Transverse colon (tissue), 4 donors: ENCODE measurements at regions of chr3 and their contacts with region 1.

Region 1: GRCh38 chr3:118884748-118885206 is 149.9 kb downstream of the IGSF11 start:
- DNase-seq: peak; percentile 73
- H3K4me3 ChIP-seq: no peak overlapping the region
- H3K27ac ChIP-seq: no peak overlapping the region
- H3K4me1 ChIP-seq: no peaks in the 10 kb centered on the region
- H3K27me3 ChIP-seq: peaks cover 7% of the 10 kb centered on the region
- CTCF ChIP-seq: peak; percentile 70 to 83 (median 77)
- EP300 ChIP-seq: no peak
- POLR2A ChIP-seq: no peak

Region 2: GRCh38 chr3:118029049-118029448 is 855.7 kb before region 1 on chr3:
- in situ Hi-C with region 1: no loop called
- intact Hi-C with region 1: loop called (anchors 5 kb)
- DNase-seq: no peak
- H3K4me3 ChIP-seq: no peak overlapping the region
- H3K27ac ChIP-seq: no peak overlapping the region
- H3K4me1 ChIP-seq: no peaks in the 10 kb centered on the region
- H3K27me3 ChIP-seq: no peaks in the 10 kb centered on the region
- CTCF ChIP-seq: no peak
- EP300 ChIP-seq: no peak
- POLR2A ChIP-seq: no peak

Region 3: DNA sequence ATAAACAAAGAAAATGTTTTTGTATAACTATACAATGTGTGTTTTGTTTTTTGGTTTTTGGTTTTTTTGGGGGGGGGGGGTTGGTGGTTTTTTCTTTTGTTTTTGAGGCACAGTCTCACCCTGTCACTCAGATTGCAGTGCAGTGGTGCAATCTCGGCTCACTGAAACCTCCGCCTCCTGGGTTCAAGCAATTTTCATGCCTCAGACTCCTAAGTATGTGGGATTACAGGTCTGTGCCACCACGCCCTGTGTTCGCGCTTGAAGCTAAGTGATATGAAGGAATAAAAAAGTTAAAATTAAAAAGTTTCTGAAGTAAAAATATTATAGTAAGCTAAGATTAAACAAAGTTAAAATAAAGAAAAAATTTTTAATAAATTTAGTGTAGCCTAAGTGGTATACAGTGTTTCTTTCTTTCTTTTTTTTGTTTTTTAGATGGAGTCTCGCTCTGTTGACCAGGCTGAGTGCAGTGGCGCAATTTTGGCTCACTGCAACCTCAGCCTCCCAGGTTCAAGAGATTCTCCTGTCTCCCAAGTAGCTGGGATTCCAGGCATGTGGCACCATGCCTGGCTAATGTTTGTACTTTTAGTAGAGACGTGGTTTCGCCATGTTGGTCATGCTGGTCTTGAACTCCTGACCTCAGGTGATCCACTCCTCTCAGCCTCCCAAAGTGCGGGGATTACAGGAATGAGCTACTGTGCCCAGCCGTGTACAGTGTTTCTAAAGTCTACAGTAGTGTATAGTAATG is 207.3 kb after region 1 on chr3:
- in situ Hi-C with region 1: loop called in 2 of 4 experiments (anchors 5 to 10 kb)
- intact Hi-C with region 1: no loop called
- DNase-seq: no peak
- H3K4me3 ChIP-seq: no peak overlapping the region
- H3K27ac ChIP-seq: no peak overlapping the region
- H3K4me1 ChIP-seq: no peaks in the 10 kb centered on the region
- H3K27me3 ChIP-seq: no peaks in the 10 kb centered on the region
- CTCF ChIP-seq: no peak
- EP300 ChIP-seq: no peak
- POLR2A ChIP-seq: no peak

Region 4: GRCh38 chr3:119240591-119241434 is 356.0 kb after region 1 on chr3 and contains the start of gene B4GALT4:
- in situ Hi-C with region 1: loop called in 3 of 4 experiments (anchors 25 kb)
- intact Hi-C with region 1: no loop called
- DNase-seq: peak; percentile 93
- H3K4me3 ChIP-seq: peak within 1 kb of the TSS; percentile 30 to 84 (median 78)
- H3K27ac ChIP-seq: peak within 1 kb of the TSS; percentile 86 to 98 (median 96)
- H3K4me1 ChIP-seq: peaks cover 0 to 33% (median 23%) of the 10 kb centered on the region in 4 donors
- H3K27me3 ChIP-seq: no peaks in the 10 kb centered on the region
- CTCF ChIP-seq: no peak
- EP300 ChIP-seq: no peak
- POLR2A ChIP-seq: peak; percentile 96
- total RNA-seq, gene B4GALT4: 27.7 to 54.2 (median 52.0) TPM

Region 5: DNA sequence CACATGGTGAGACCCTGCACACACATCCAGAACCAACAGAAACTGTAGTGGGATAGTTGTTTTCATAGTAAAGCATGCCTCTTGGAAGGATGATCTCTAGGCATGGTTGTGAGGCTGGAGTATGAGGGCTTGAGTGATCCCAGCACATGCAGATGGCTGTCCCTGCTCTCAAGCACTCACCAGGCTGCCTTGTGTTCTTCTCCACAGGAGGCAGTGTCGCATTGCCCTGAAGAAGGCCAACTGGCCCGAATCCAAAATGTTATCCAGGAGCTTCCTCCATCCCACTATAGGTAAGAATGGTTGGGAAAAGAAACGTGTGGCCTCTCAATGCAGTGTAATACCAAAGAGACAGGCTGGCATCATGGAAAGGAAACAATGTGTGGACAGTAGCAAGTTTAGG is 495.9 kb after region 1 on chr3:
- in situ Hi-C with region 1: loop called in 1 of 4 experiments (anchors 25 kb)
- intact Hi-C with region 1: no loop called
- DNase-seq: no peak
- H3K4me3 ChIP-seq: no peak overlapping the region
- H3K27ac ChIP-seq: no peak overlapping the region
- H3K4me1 ChIP-seq: no peaks in the 10 kb centered on the region
- H3K27me3 ChIP-seq: no peaks in the 10 kb centered on the region
- CTCF ChIP-seq: no peak
- EP300 ChIP-seq: no peak
- POLR2A ChIP-seq: no peak